CD4-positive, alpha-beta memory T cell (primary cell): ENCODE measurements at regions of chr11 and their contacts with region 1.

Region 1: GRCh38 chr11:3797329-3798095 is at the start of gene NUP98:
- DNase-seq: peak; percentile 100
- H3K4me3 ChIP-seq: peak within 1 kb of the TSS; percentile 89 to 98
- H3K4me3 Mint-ChIP-seq: peak within 1 kb of the TSS; percentile 91 to 98 (median 96)
- H3K27ac ChIP-seq: peak within 1 kb of the TSS; percentile 99
- H3K27ac Mint-ChIP-seq: peak within 1 kb of the TSS; percentile 96 to 100 (median 99)
- H3K4me1 ChIP-seq: peaks cover 42% of the 10 kb centered on the region
- H3K4me1 Mint-ChIP-seq: peaks cover 26 to 61% (median 45%) of the 10 kb centered on the region in 4 donors
- H3K27me3 ChIP-seq: no peaks in the 10 kb centered on the region
- H3K27me3 Mint-ChIP-seq: no peaks in the 10 kb centered on the region
- total RNA-seq, gene NUP98: 109 to 112 TPM

Region 2: DNA sequence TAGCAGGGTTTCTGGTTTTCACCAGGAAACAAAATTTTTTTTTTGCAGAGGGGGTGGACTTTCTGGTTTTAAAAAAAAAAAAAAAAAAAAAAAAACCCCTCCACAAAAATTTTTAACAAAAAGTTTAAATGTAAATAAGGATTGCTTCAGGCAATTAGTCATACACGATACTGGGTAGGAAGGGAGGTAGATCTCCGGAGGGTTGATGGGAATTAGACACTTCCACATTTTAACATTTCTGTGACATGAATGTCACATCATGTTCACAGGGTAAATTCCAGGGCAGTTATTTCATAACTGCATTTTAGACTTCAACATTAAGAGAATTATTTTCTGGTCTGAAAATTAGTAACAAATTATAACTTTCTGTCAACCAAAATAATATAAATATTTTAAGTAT is 16.1 kb before region 1 on chr11:
- CTCF ChIA-PET with region 1: interaction called, 3 read pairs
- POLR2A ChIA-PET with region 1: interaction called, 21 read pairs
- intact Hi-C with region 1: loop called (anchors 1 kb)
- DNase-seq: no peak
- H3K4me3 ChIP-seq: no peak overlapping the region
- H3K4me3 Mint-ChIP-seq: no peak overlapping the region
- H3K27ac ChIP-seq: no peak overlapping the region
- H3K27ac Mint-ChIP-seq: peak overlapping the region in 4 of 7 donors; percentile 41 to 81 (median 66)
- H3K4me1 ChIP-seq: peaks cover 47% of the 10 kb centered on the region
- H3K4me1 Mint-ChIP-seq: peaks cover 27 to 48% (median 37%) of the 10 kb centered on the region in 4 donors
- H3K27me3 ChIP-seq: no peaks in the 10 kb centered on the region
- H3K27me3 Mint-ChIP-seq: no peaks in the 10 kb centered on the region

Region 3: GRCh38 chr11:3824714-3825472 is 27.4 kb after region 1 on chr11:
- CTCF ChIA-PET with region 1: interaction called, 3 read pairs
- POLR2A ChIA-PET with region 1: interaction called, 5 read pairs
- intact Hi-C with region 1: loop called (anchors 1 kb)
- DNase-seq: peak; percentile 75 to 85 (median 78)
- H3K4me3 ChIP-seq: no peak overlapping the region
- H3K4me3 Mint-ChIP-seq: peak overlapping the region in 4 of 8 donors; percentile 13 to 50 (median 34)
- H3K27ac ChIP-seq: peak overlapping the region; percentile 22
- H3K27ac Mint-ChIP-seq: peak overlapping the region; percentile 79 to 94 (median 89)
- H3K4me1 ChIP-seq: peaks cover 20% of the 10 kb centered on the region
- H3K4me1 Mint-ChIP-seq: peaks cover 20 to 47% (median 32%) of the 10 kb centered on the region in 4 donors
- H3K27me3 ChIP-seq: no peaks in the 10 kb centered on the region
- H3K27me3 Mint-ChIP-seq: no peaks in the 10 kb centered on the region

Region 4: DNA sequence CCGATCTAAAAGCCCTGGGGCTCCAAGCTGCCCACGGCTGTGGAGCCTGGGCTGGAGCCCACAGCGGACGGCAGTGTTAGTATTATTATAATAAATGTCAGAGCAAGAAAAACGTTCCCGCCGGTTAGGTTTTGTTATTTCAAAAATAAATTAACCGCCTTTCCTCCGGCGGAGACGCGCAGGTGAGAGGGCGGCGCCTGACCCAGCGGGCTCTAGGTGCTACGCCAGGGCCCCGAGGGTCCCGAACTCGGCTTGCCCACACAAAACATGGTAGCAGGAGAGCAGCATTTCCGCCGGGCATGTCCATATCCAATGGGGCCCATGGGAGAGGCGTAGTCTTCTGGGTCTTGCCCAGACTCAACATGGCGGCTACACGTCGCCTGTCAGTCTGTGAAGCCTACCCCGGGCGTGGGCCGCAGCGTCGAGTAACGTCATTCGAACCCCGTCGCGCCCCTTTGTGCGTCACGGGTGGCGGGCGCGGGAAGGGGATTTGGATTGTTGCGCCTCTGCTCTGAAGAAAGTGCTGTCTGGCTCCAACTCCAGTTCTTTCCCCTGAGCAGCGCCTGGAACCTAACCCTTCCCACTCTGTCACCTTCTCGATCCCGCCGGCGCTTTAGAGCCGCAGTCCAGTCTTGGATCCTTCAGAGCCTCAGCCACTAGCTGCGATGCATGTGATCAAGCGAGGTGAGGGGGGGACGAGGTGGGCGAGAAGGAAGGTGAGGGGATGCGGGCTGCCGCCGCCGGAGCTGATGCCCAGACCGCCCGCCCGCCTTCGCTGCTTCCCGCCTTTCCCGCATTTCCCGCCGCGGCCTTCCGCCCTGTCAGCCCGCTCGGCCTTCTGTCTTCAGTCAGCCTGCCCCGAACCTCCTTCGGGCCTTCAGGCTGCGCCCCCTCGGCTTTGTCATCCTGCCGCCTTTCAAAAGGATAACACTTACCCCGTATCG is 297.1 kb after region 1 on chr11 and contains the start of gene RRM1:
- CTCF ChIA-PET with region 1: no interaction called
- POLR2A ChIA-PET with region 1: no interaction called
- intact Hi-C with region 1: loop called (anchors 1 kb)
- DNase-seq: peak; percentile 93 to 95 (median 94)
- H3K4me3 ChIP-seq: peak within 1 kb of the TSS; percentile 84 to 91
- H3K4me3 Mint-ChIP-seq: peak within 1 kb of the TSS; percentile 89 to 99 (median 98)
- H3K27ac ChIP-seq: peak within 1 kb of the TSS; percentile 90
- H3K27ac Mint-ChIP-seq: peak within 1 kb of the TSS; percentile 94 to 100 (median 99)
- H3K4me1 ChIP-seq: peaks cover 85% of the 10 kb centered on the region
- H3K4me1 Mint-ChIP-seq: peaks cover 60 to 90% (median 72%) of the 10 kb centered on the region in 4 donors
- H3K27me3 ChIP-seq: no peaks in the 10 kb centered on the region
- H3K27me3 Mint-ChIP-seq: no peaks in the 10 kb centered on the region
- total RNA-seq, gene RRM1: 38.0 to 40.6 TPM